ENCODE measurements at regions of chr1 and their contacts with region 1.

Region 1: GRCh38 chr1:2233997-2234761 is 6.1 kb downstream of the SKI start:
- DNase-seq: peak; percentile 52 to 82 (median 72)
- ATAC-seq: peak; percentile 80
- H3K4me3 ChIP-seq: peak overlapping the region; percentile 83
- H3K4me3 Mint-ChIP-seq: peak overlapping the region; percentile 89 to 100 (median 94)
- H3K27ac ChIP-seq: peak overlapping the region; percentile 78
- H3K27ac Mint-ChIP-seq: peak overlapping the region; percentile 90 to 99 (median 97)
- H3K4me1 ChIP-seq: peaks cover 64 to 78% of the 10 kb centered on the region in 2 donors
- H3K4me1 Mint-ChIP-seq: peaks cover 50 to 70% (median 61%) of the 10 kb centered on the region in 7 donors
- H3K27me3 ChIP-seq: no peaks in the 10 kb centered on the region
- H3K27me3 Mint-ChIP-seq: no peaks in the 10 kb centered on the region

Region 2: GRCh38 chr1:2212542-2213491 is 21.4 kb before region 1 on chr1:
- CTCF ChIA-PET with region 1: interaction called, 3 read pairs
- POLR2A ChIA-PET with region 1: interaction called, 6 read pairs
- intact Hi-C with region 1: loop called in 1 of 2 experiments (anchors 1 kb)
- DNase-seq: peak in 8 of 9 donors; percentile 44 to 71 (median 66)
- ATAC-seq: peak; percentile 79
- H3K4me3 ChIP-seq: peak overlapping the region; percentile 41
- H3K4me3 Mint-ChIP-seq: peak overlapping the region in 6 of 10 donors; percentile 17 to 74 (median 53)
- H3K27ac ChIP-seq: peak overlapping the region; percentile 46
- H3K27ac Mint-ChIP-seq: peak overlapping the region in 7 of 9 donors; percentile 17 to 70 (median 39)
- H3K4me1 ChIP-seq: peaks cover 8 to 13% of the 10 kb centered on the region in 2 donors
- H3K4me1 Mint-ChIP-seq: peaks cover 0 to 11% (median 2%) of the 10 kb centered on the region in 7 donors
- H3K27me3 ChIP-seq: no peaks in the 10 kb centered on the region
- H3K27me3 Mint-ChIP-seq: no peaks in the 10 kb centered on the region

Region 3: GRCh38 chr1:2247760-2248126 is 13.6 kb after region 1 on chr1:
- CTCF ChIA-PET with region 1: interaction called, 6 read pairs
- POLR2A ChIA-PET with region 1: interaction called, 244 read pairs
- intact Hi-C with region 1: loop called in 1 of 2 experiments (anchors 2 kb)
- DNase-seq: no peak
- ATAC-seq: no peak
- H3K4me3 ChIP-seq: no peak overlapping the region
- H3K4me3 Mint-ChIP-seq: peak overlapping the region in 8 of 10 donors; percentile 32 to 85 (median 60)
- H3K27ac ChIP-seq: no peak overlapping the region
- H3K27ac Mint-ChIP-seq: peak overlapping the region in 2 of 9 donors; percentile 56 to 79
- H3K4me1 ChIP-seq: peaks cover 19 to 78% of the 10 kb centered on the region in 2 donors
- H3K4me1 Mint-ChIP-seq: peaks cover 25 to 98% (median 60%) of the 10 kb centered on the region in 7 donors
- H3K27me3 ChIP-seq: no peaks in the 10 kb centered on the region
- H3K27me3 Mint-ChIP-seq: no peaks in the 10 kb centered on the region

Region 4: DNA sequence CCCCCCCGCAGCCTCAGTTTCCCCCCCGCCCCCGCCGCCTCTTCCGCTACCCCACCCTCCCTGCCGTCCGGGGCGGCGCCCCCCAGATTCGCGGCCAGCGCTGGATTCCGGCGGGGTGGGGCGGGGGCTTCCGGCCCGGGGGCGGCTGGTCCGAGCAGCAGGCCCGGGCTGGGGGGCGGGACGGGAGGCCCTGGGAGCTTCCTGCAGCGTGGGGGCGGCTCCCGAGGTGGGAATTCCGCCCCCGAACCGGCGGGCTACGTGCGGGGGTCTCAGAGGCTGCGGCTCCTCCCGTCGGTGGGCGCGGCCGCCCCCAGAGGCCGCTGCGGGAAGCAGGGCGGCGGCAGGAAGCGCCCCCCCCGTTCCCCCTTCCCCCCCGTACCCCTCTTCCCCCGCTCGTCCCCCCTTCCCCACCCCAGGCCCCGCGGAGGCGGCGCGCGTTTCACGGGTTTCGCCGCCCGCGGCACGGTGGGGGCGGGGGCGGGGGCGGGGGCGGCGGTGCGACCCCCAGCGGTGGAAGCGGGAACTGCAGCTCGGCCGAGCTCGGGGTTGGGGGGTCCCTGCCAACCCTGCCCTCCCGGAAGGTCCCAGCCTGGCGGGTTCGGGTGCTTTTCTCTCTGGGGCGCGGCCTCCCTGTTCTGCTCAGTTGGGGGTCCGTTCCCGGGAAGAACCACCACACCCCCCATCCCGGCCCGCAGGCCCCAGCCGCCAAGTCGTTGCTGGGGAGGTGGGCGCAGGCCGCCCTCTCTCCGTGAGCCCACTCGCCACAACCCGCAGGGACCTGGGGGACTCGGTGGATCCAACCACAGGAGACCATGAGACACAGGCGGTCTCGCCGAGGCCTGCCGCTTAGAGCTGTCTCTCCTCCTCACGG is 80.9 kb after region 1 on chr1:
- CTCF ChIA-PET with region 1: interaction called, 5 read pairs
- POLR2A ChIA-PET with region 1: interaction called, 12 read pairs
- intact Hi-C with region 1: loop called in 1 of 2 experiments (anchors 1 kb)
- DNase-seq: peak; percentile 56 to 77 (median 70)
- ATAC-seq: peak; percentile 81
- H3K4me3 ChIP-seq: peak overlapping the region; percentile 55
- H3K4me3 Mint-ChIP-seq: peak overlapping the region in 9 of 10 donors; percentile 12 to 73 (median 64)
- H3K27ac ChIP-seq: peak overlapping the region; percentile 84
- H3K27ac Mint-ChIP-seq: peak overlapping the region in 8 of 9 donors; percentile 38 to 86 (median 65)
- H3K4me1 ChIP-seq: peaks cover 29 to 42% of the 10 kb centered on the region in 2 donors
- H3K4me1 Mint-ChIP-seq: peaks cover 3 to 19% (median 12%) of the 10 kb centered on the region in 7 donors
- H3K27me3 ChIP-seq: no peaks in the 10 kb centered on the region
- H3K27me3 Mint-ChIP-seq: no peaks in the 10 kb centered on the region